Heart right ventricle (tissue), 16 donors: ENCODE measurements at regions of chr22 and their contacts with region 1.

Region 1: DNA sequence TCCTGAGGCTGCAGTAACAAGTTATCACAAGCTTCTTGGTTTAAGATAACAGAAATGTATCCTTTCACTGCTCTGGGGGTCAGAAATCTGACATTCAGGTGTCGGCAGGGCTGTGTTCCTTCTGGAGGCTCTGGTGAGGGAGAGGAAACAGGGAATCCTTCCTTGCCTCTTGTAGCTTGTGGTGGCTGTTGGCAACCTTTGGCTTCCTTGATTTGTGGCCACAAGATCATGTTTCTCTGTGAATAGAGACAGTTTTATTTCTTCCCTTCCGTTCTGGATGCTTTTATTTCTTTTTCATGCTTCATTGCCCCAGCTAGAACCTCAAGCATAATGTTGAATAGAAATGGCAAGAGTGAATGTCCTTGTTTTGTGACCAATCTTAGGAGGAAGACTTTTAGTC is 44.0 kb downstream of the MPPED1 start:
- DNase-seq: no peak
- ATAC-seq: no peak
- H3K4me3 ChIP-seq: no peak overlapping the region
- H3K27ac ChIP-seq: no peak overlapping the region
- H3K4me1 ChIP-seq: no peaks in the 10 kb centered on the region
- H3K27me3 ChIP-seq: peaks cover 0 to 41% (median 20%) of the 10 kb centered on the region in 7 donors
- CTCF ChIP-seq: no peak

Region 2: GRCh38 chr22:43501878-43502277 is 46.0 kb after region 1 on chr22:
- intact Hi-C with region 1: loop called in 1 of 10 experiments (anchors 2 kb)
- DNase-seq: no peak
- ATAC-seq: no peak
- H3K4me3 ChIP-seq: no peak overlapping the region
- H3K27ac ChIP-seq: no peak overlapping the region
- H3K4me1 ChIP-seq: no peaks in the 10 kb centered on the region
- H3K27me3 ChIP-seq: no peaks in the 10 kb centered on the region
- CTCF ChIP-seq: no peak

Region 3: GRCh38 chr22:43636086-43636485 is 180.2 kb after region 1 on chr22:
- intact Hi-C with region 1: no loop called
- DNase-seq: no peak
- ATAC-seq: no peak
- H3K4me3 ChIP-seq: no peak overlapping the region
- H3K27ac ChIP-seq: no peak overlapping the region
- H3K4me1 ChIP-seq: no peaks in the 10 kb centered on the region
- H3K27me3 ChIP-seq: no peaks in the 10 kb centered on the region
- CTCF ChIP-seq: no peak

Region 4: GRCh38 chr22:43689356-43689755 is 233.5 kb after region 1 on chr22:
- intact Hi-C with region 1: no loop called
- DNase-seq: no peak
- ATAC-seq: no peak
- H3K4me3 ChIP-seq: no peak overlapping the region
- H3K27ac ChIP-seq: no peak overlapping the region
- H3K4me1 ChIP-seq: no peaks in the 10 kb centered on the region
- H3K27me3 ChIP-seq: no peaks in the 10 kb centered on the region
- CTCF ChIP-seq: no peak